ENCODE measurements at regions of chr1 and their contacts with region 1.

Region 1: DNA sequence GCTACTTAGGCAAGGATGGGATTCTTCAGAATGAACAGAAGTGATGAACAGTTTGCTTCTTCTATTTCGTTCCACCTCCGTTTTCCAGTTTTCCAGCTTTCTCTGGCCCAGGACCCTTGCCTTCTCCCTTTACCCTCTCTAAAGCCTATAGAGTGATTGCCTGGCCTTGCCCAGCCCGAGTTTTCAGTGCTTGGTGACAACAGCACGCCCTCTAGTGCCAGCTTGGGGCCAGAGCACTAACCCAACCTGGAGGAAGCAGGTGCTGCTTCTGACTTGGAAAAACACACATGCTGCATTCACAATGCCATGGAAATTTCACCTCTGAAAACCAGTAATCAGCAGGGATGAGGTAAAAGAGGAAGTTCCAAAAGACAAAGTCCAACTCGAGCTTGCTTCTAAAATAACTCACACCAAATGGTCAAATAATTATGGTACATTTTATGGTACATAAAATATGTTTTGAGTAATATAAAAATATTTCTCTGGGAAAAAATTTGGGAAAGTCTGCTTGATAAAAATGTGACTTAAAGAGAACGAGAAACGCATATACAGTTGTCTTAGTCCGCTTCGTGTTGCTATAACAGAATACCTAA is 26.1 kb downstream of the UBE2T start:
- DNase-seq: peak; percentile 71
- ATAC-seq: peak; percentile 96
- H3K4me3 ChIP-seq: no peak overlapping the region
- H3K27ac ChIP-seq: no peak overlapping the region
- H3K4me1 ChIP-seq: no peaks in the 10 kb centered on the region
- H3K27me3 ChIP-seq: no peaks in the 10 kb centered on the region
- CTCF ChIP-seq: peak; percentile 97

Region 2: GRCh38 chr1:202189916-202190315 is 125.8 kb before region 1 on chr1:
- CTCF ChIA-PET with region 1: interaction called, 11 read pairs
- POLR2A ChIA-PET with region 1: interaction called, 9 read pairs
- in situ Hi-C with region 1: no loop called
- intact Hi-C with region 1: loop called (anchors 1 kb)
- DNase-seq: no peak
- ATAC-seq: peak; percentile 38
- H3K4me3 ChIP-seq: no peak overlapping the region
- H3K27ac ChIP-seq: no peak overlapping the region
- H3K4me1 ChIP-seq: peaks cover 5% of the 10 kb centered on the region
- H3K27me3 ChIP-seq: peaks cover 8% of the 10 kb centered on the region
- CTCF ChIP-seq: peak; percentile 18

Region 3: GRCh38 chr1:202207292-202207691 is 108.4 kb before region 1 on chr1:
- CTCF ChIA-PET with region 1: interaction called, 3 read pairs
- POLR2A ChIA-PET with region 1: no interaction called
- in situ Hi-C with region 1: loop called (anchors 25 kb)
- intact Hi-C with region 1: no loop called
- DNase-seq: no peak
- ATAC-seq: no peak
- H3K4me3 ChIP-seq: no peak overlapping the region
- H3K27ac ChIP-seq: no peak overlapping the region
- H3K4me1 ChIP-seq: no peaks in the 10 kb centered on the region
- H3K27me3 ChIP-seq: peaks cover 4% of the 10 kb centered on the region
- CTCF ChIP-seq: peak; percentile 31; the same call in 1 of the 2 replicates

Measured in Panc1 (cell line).